AG04449 (cell line): ENCODE measurements at regions of chr13 and their contacts with region 1.

Region 1: GRCh38 chr13:35789335-35790165 is 313.1 kb upstream of the MAB21L1 start:
- DNase-seq: no peak
- H3K4me3 ChIP-seq: no peak overlapping the region
- CTCF ChIP-seq: peak; percentile 50

Region 2: DNA sequence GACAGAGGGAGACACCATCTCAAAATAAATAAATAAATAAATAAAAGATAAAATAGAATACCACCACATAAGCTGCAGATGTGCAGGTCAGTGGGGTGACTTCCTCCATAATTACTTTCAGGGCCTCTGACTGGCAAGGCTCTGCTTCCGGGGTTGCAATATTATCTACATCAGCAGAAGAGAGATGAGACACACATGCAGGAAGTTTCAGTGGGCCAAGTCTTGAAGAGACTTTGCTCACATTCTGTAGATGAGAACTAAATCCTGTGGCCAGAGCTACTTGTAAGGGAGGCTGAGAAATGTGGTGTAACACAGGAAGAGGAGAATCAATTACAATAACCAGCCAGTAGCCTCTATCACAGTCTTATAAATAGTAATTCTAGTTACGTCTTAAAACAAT is 223.2 kb before region 1 on chr13:
- CTCF ChIA-PET with region 1: no interaction called
- POLR2A ChIA-PET with region 1: no interaction called
- DNase-seq: no peak
- H3K4me3 ChIP-seq: no peak overlapping the region
- CTCF ChIP-seq: no peak

Region 3: GRCh38 chr13:35630551-35631275 is 158.8 kb before region 1 on chr13:
- CTCF ChIA-PET with region 1: interaction called, 31 read pairs
- POLR2A ChIA-PET with region 1: no interaction called
- DNase-seq: peak; percentile 33
- H3K4me3 ChIP-seq: no peak overlapping the region
- CTCF ChIP-seq: peak; percentile 76

Region 4: DNA sequence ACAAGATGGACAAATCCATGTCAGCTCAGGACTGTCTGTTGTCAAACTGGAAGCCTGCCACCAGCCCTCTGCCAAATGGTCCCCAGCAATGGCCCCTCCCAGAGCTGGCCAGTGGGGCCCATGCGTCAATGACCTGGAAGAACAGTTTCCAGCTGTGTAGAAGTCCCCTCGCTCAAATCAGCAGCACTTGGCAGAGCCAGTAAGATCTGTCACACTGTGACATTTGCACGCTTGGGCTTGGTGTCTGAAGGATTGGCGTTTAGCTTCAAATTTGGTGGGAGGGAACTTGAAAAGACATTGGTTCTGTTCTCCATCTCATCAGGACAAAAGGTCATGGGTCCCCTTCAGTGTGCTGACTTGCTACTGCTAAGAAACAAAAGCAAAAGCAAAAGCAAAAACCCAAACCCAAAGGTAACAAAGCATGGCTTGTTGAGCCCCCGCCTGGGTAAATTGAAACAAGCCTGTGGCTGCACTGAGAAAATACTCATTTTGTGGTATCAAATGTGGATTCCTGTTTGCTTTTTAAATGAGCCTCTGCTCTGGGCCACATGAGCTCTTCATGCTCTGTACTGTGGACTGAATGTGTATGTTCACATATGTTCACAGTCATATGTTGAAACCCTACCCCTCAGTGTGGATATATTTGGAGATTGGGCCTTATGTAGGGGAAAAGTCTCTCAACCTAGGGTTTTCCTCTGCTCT is 59.5 kb before region 1 on chr13:
- CTCF ChIA-PET with region 1: interaction called, 72 read pairs
- POLR2A ChIA-PET with region 1: no interaction called
- DNase-seq: no peak
- H3K4me3 ChIP-seq: no peak overlapping the region
- CTCF ChIP-seq: no peak

Region 5: DNA sequence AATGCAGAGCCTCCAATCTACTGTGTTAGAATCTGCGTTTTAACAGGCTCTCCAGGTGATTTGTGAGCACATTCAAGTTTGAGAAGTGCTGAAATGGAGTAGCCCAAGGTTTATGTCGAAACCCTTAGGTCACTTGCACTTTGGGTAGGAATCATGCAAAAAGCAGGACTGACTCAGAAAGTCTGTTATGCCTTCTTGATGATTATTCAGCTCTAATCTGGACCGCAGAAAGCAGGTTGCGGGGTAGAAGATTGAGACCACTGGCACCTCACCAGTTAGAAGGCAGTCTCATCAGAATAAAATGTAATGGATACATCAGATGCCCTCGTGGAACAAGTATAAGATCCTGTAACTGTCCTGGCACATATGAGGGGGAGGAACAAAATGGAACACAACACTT is 15.4 kb after region 1 on chr13:
- CTCF ChIA-PET with region 1: interaction called, 18 read pairs
- POLR2A ChIA-PET with region 1: no interaction called
- DNase-seq: no peak
- H3K4me3 ChIP-seq: no peak overlapping the region
- CTCF ChIP-seq: no peak

Region 6: DNA sequence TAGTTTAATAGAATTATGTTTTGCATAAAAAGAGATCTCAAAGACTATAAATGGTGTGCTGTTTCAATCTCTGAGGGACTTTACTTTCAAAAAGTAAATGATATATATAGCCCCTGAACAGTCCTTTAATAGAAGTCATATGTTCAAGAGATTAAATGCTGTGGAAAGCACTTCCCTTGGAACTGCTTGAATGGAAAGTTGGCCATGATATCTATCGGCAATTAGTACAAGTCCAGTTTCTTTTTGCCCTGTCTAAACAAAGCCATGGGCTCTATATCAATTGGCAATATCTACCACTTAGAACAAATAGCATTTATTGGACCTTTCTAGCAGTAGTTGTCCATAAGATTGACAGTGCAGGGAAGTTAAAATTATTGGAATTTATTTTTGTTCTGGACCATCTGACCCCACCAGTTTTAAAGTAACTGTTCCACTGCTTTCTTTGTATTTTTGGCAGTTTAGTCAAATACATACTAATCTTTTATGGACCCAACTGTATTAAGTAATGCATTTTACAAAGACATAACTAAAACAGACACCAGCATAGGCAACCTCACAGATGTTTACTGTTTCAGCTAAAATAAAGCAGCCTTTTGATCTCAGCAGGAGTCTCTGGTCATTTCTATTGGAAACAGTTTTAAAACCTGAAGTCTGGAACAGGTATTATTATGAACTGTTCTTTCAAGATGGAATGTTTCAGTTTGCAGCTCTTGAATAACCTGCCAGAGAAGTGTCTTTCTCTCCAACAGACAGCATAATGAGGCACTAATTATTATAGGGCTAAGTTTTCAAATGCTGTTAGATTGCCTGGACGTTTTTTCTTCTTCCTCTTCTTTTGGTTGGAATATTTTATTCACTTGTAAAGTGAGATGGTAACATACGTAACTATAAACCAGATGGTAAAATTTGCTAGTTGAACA is 59.0 kb after region 1 on chr13:
- CTCF ChIA-PET with region 1: no interaction called
- POLR2A ChIA-PET with region 1: no interaction called
- DNase-seq: no peak
- H3K4me3 ChIP-seq: no peak overlapping the region
- CTCF ChIP-seq: no peak